CD8-positive, alpha-beta T cell (primary cell): ENCODE measurements at regions of chr18 and their contacts with region 1.

Region 1: GRCh38 chr18:3447895-3448837 is 1.8 kb upstream of the TGIF1 start:
- DNase-seq: peak; percentile 65 to 94 (median 86)
- ATAC-seq: peak; percentile 41
- H3K4me3 ChIP-seq: peak overlapping the region; percentile 66 to 95
- H3K4me3 Mint-ChIP-seq: peak overlapping the region; percentile 90
- H3K27ac ChIP-seq: peak overlapping the region; percentile 95 to 100
- H3K27ac Mint-ChIP-seq: peak overlapping the region; percentile 99
- H3K4me1 ChIP-seq: peaks cover 15% of the 10 kb centered on the region
- H3K4me1 Mint-ChIP-seq: peaks cover 39% of the 10 kb centered on the region
- H3K27me3 ChIP-seq: no peaks in the 10 kb centered on the region
- H3K27me3 Mint-ChIP-seq: no peaks in the 10 kb centered on the region
- CTCF ChIP-seq: no peak

Region 2: GRCh38 chr18:2958819-2959298 is 489.3 kb before region 1 on chr18:
- CTCF ChIA-PET with region 1: no interaction called
- POLR2A ChIA-PET with region 1: no interaction called
- intact Hi-C with region 1: loop called (anchors 5 kb)
- DNase-seq: peak in 2 of 9 experiments; percentile 49 to 70
- ATAC-seq: no peak
- H3K4me3 ChIP-seq: no peak overlapping the region
- H3K4me3 Mint-ChIP-seq: peak overlapping the region; percentile 50
- H3K27ac ChIP-seq: peak overlapping the region; percentile 65 to 90
- H3K27ac Mint-ChIP-seq: peak overlapping the region; percentile 97
- H3K4me1 ChIP-seq: peaks cover 92% of the 10 kb centered on the region
- H3K4me1 Mint-ChIP-seq: peaks cover 89% of the 10 kb centered on the region
- H3K27me3 ChIP-seq: no peaks in the 10 kb centered on the region
- H3K27me3 Mint-ChIP-seq: no peaks in the 10 kb centered on the region
- CTCF ChIP-seq: no peak

Region 3: DNA sequence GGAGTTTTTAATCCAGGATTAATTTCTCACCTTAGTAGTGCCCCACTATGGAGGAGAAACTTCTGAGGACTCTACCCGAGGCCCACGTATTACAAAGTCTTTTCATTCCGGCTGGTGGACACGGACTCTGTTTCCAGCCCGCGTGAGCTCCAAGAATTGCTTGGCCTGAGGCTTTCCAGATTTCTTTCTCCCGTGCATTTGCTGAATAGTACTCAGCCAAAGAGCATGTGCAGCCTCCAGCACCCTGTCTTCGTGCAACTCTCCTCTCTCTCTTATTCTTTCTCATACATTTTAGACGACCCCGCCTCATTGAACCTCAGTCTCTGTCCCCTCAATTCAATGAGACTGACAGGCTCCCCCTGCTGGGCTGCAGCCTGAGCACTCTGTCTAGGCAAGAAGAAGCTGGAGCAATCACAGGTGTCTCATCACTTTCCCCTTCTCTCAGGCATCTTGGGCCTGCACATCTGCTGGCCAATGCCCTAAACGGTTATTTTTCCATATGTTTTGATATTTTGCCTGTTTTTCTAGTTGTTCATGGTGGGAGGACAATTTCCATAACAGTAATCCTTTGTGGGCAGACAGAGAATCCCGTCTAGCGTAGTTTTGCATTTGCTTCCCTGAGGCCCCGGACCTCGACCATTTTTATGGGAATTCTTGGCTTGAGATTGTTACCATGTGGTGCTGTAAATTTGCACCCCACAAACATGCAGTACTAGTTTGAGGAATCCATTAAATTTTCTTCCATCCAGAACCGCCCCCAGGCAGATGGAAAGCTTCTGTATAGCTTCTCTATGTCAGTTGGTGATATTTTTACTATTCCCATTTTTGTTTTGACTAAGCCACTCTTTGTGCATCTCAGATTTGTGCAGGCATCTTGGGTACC is 385.1 kb before region 1 on chr18:
- CTCF ChIA-PET with region 1: no interaction called
- POLR2A ChIA-PET with region 1: no interaction called
- intact Hi-C with region 1: loop called in 1 of 2 experiments (anchors 5 kb)
- DNase-seq: peak; percentile 42 to 79 (median 72)
- ATAC-seq: peak; percentile 27
- H3K4me3 ChIP-seq: no peak overlapping the region
- H3K4me3 Mint-ChIP-seq: peak overlapping the region; percentile 58
- H3K27ac ChIP-seq: peak overlapping the region; percentile 88 to 95
- H3K27ac Mint-ChIP-seq: peak overlapping the region; percentile 93
- H3K4me1 ChIP-seq: peaks cover 58% of the 10 kb centered on the region
- H3K4me1 Mint-ChIP-seq: peaks cover 67% of the 10 kb centered on the region
- H3K27me3 ChIP-seq: no peaks in the 10 kb centered on the region
- H3K27me3 Mint-ChIP-seq: no peaks in the 10 kb centered on the region
- CTCF ChIP-seq: peak; percentile 85

Region 4: DNA sequence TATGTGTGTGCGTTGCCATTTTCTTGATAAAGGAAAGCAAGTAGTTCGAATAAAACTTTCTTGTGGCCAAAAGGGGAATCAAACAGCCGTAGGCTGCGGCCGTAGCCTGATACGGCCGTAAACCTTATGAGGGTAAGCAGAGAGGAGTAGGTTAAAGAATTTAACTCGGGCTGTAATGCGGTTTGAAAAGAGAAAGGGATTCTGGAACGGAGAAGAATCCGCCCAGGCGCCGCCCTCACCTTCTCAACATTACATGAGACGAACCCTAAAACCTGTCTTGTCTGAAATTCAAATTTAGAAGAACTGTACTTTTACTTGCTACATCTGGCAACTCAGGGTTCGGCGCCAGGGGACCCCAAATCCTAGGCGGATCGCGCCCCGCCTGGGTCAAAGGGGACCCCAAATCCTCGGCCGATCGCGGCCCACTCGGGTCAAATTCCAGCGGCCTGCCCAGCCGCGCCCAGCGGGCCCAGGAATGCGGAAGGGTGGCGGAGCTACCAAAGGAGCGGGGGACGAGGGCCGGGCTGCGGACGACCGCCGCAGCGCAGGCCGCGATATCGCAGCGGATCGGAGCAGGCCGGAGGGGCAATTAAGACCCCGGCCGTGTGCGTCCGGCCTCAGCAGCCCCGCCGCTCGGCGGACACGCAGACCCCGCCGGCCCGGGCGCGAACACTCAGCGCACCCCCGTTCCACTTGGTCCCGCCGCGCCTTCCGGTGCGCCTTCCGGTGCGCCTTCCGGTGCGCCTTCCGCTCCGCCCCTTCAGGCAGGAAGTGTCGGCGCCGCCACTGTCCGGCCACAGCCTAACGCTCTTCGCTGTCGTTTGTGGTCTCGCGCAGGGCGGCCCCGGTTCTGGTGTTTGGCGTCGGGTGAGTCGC is 186.6 kb before region 1 on chr18 and contains the start of gene MYL12B:
- CTCF ChIA-PET with region 1: interaction called, 4 read pairs
- POLR2A ChIA-PET with region 1: interaction called, 27 read pairs
- intact Hi-C with region 1: loop called (anchors 1 to 5 kb)
- DNase-seq: peak; percentile 58 to 92 (median 79)
- ATAC-seq: peak; percentile 69
- H3K4me3 ChIP-seq: peak within 1 kb of the TSS; percentile 72 to 80
- H3K4me3 Mint-ChIP-seq: peak within 1 kb of the TSS; percentile 90
- H3K27ac ChIP-seq: peak within 1 kb of the TSS; percentile 96 to 97
- H3K27ac Mint-ChIP-seq: peak within 1 kb of the TSS; percentile 100
- H3K4me1 ChIP-seq: peaks cover 52% of the 10 kb centered on the region
- H3K4me1 Mint-ChIP-seq: peaks cover 82% of the 10 kb centered on the region
- H3K27me3 ChIP-seq: no peaks in the 10 kb centered on the region
- H3K27me3 Mint-ChIP-seq: no peaks in the 10 kb centered on the region
- CTCF ChIP-seq: no peak
- total RNA-seq, gene MYL12B: 117 to 132 TPM

Region 5: GRCh38 chr18:3297025-3297984 is 150.9 kb before region 1 on chr18:
- CTCF ChIA-PET with region 1: interaction called, 39 read pairs
- POLR2A ChIA-PET with region 1: interaction called, 37 read pairs
- intact Hi-C with region 1: loop called in 1 of 2 experiments (anchors 1 kb)
- DNase-seq: peak; percentile 86 to 95 (median 93)
- ATAC-seq: peak; percentile 98
- H3K4me3 ChIP-seq: peak overlapping the region; percentile 71 to 87
- H3K4me3 Mint-ChIP-seq: peak overlapping the region; percentile 92
- H3K27ac ChIP-seq: peak overlapping the region; percentile 51 to 58
- H3K27ac Mint-ChIP-seq: peak overlapping the region; percentile 86
- H3K4me1 ChIP-seq: peaks cover 7% of the 10 kb centered on the region
- H3K4me1 Mint-ChIP-seq: peaks cover 8% of the 10 kb centered on the region
- H3K27me3 ChIP-seq: peaks cover 0 to 2% of the 10 kb centered on the region in 2 experiments
- H3K27me3 Mint-ChIP-seq: peaks cover 27% of the 10 kb centered on the region
- CTCF ChIP-seq: peak; percentile 79

Region 6: GRCh38 chr18:3585656-3586509 is 137.7 kb after region 1 on chr18:
- CTCF ChIA-PET with region 1: interaction called, 35 read pairs
- POLR2A ChIA-PET with region 1: interaction called, 7 read pairs
- intact Hi-C with region 1: no loop called
- DNase-seq: peak in 8 of 9 experiments; percentile 40 to 83 (median 66)
- ATAC-seq: peak; percentile 87
- H3K4me3 ChIP-seq: no peak overlapping the region
- H3K4me3 Mint-ChIP-seq: no peak overlapping the region
- H3K27ac ChIP-seq: no peak overlapping the region
- H3K27ac Mint-ChIP-seq: no peak overlapping the region
- H3K4me1 ChIP-seq: no peaks in the 10 kb centered on the region
- H3K4me1 Mint-ChIP-seq: peaks cover 8% of the 10 kb centered on the region
- H3K27me3 ChIP-seq: no peaks in the 10 kb centered on the region
- H3K27me3 Mint-ChIP-seq: no peaks in the 10 kb centered on the region
- CTCF ChIP-seq: peak; percentile 56